ENCODE measurements at regions of chr2 and their contacts with region 1.

Region 1: GRCh38 chr2:69667805-69668382 is 24.4 kb upstream of the AAK1 start:
- DNase-seq: no peak
- H3K4me3 ChIP-seq: no peak overlapping the region
- H3K27ac ChIP-seq: no peak overlapping the region
- H3K4me1 ChIP-seq: no peaks in the 10 kb centered on the region
- H3K27me3 ChIP-seq: no peaks in the 10 kb centered on the region
- CTCF ChIP-seq: no peak

Region 2: DNA sequence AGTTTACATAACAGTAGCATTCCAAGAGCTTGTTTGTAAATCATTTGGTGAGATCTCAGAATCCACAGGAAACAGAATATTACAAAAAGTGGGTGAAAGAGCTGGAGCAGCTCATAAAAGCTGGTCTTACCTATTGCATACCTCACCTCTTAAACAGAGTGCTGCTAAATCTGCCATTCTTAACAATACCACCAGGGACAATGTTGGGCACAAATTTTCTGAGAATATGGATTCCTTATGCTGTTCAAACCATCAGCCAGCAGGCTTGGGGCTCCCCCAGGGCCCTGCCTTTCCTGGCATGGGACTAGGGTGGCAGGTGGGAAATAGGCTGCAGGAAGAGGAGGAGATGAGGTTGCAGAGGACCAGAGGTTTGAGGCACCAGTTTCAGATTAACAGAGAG is 830.2 kb after region 1 on chr2:
- CTCF ChIA-PET with region 1: no interaction called
- POLR2A ChIA-PET with region 1: interaction called, 15 read pairs
- intact Hi-C with region 1: no loop called
- DNase-seq: no peak
- H3K4me3 ChIP-seq: no peak overlapping the region
- H3K27ac ChIP-seq: no peak overlapping the region
- H3K4me1 ChIP-seq: no peaks in the 10 kb centered on the region
- H3K27me3 ChIP-seq: peaks cover 65% of the 10 kb centered on the region
- CTCF ChIP-seq: peak; percentile 36; the same call in 1 of the 2 replicates

Measured in A673 (cell line).